Cardiac septum (tissue), 1 donor: ENCODE measurements at regions of chr4 and their contacts with region 1.

Region 1: GRCh38 chr4:150297861-150298474 is 219.7 kb downstream of the DCLK2 start:
- DNase-seq: no peak

Region 2: GRCh38 chr4:150164956-150165629 is 132.9 kb before region 1 on chr4:
- intact Hi-C with region 1: no loop called
- DNase-seq: no peak

Region 3: DNA sequence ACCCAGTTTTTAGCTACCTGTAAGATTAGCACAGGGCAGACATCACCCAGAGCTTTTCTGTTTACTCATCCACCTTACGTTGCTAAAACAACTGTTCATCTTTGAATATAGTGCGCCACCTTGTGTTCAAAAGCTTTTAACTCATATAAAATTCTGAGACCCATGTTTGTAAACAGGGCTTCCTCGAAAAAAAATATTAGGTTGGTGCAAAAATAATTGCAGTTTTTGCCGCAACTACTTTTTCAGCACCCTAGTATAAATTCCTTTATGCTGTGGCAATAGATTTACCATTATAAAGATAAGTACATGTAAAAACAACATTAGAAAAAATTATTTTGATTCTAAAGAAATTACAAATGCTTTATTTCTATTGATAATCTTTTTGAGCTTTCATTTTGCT is 569.2 kb after region 1 on chr4:
- intact Hi-C with region 1: loop called (anchors 2 kb)
- DNase-seq: no peak